Caco-2 (cell line): ENCODE measurements at regions of chr1 and their contacts with region 1.

Region 1: DNA sequence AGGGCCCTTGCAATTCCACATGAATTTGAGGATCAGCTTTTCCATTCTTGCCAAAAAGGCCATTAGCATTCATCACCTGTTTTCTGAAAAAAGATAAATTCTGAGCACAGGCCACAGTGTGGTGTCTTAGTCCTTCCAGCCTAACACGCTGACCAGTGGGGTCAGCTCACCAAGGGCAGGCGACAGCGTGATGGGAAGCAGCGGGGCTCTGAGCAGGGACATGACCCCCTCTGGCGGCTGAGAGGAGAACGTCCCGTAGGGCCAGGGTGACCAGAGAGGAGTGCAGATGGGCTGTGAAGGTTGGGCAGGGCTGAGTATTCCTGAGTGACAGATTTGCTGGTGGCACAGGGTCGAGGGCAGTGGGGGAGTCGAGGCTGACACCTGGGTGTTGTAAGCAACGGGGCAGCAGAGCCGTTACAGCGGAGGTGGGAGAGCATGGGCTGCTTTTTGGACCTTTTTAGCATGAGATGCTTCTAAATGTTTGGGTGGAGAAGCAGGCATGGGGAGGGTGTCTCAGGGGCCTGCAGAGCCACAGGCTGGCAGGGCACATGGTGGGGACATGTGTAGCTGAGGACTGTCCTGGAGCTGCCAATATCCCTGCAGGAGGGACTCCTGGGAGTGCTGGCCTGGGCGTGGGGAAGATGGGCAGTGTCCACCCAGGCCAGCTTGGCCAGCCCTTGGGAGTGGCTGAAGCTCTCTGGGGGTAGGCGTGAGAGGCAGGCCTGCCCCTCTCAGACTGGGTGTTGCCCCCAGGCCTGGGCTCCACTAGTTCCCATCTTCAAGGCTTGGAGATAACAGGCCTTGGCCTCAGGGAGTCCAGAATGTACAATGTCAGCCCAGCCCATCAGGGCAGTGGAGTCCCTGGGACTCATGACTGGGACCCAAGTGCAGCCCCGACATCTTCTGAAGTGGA is 8.6 kb upstream of the CALML6 start:
- DNase-seq: peak; percentile 82 to 89
- H3K4me3 ChIP-seq: no peak overlapping the region
- H3K4me3 Mint-ChIP-seq: peak overlapping the region; percentile 56
- H3K27ac Mint-ChIP-seq: peak overlapping the region; percentile 74
- H3K4me1 ChIP-seq: peaks cover 7% of the 10 kb centered on the region; the same call in 1 of the 2 replicates
- H3K4me1 Mint-ChIP-seq: peaks cover 14% of the 10 kb centered on the region
- H3K27me3 ChIP-seq: no peaks in the 10 kb centered on the region
- H3K27me3 Mint-ChIP-seq: no peaks in the 10 kb centered on the region
- CTCF ChIP-seq: peak; percentile 64 to 91

Region 2: DNA sequence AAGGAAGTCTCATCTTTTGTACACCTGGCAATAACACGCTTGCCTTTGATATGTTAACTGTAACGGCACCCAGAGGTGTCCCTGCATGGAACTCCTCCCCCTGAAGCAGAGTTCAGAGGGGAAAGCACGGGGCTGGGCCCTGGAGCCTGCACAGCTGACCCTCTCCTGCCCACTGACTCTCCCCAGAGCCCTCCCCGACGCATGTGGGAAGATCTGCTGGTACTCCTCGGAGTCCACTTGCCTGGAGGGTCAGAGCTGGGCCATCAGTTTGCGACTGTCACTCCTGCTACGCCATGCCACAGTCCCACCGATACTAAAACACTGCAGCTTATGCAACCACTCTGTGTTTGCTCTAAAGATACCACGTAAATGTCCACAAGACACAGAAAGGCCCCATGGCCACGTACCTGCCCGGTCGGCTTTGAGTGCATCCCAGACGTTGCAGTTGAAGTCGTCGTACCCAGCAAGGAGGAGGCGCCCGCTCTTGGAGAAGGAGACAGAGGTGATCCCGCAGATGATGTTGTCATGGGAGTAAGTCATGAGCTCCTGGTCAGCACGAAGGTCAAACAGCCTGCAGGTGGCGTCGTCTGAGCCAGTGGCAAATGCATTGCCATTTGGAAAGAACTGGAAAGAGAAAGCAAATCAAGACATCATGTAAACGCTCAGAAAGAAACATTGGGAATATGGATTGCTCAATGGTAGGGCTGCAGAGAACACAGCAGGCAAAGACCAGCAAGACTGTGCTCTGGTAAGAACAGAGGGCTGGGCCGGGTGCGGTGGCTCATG is 117.6 kb before region 1 on chr1:
- CTCF ChIA-PET with region 1: interaction called, 16 read pairs
- POLR2A ChIA-PET with region 1: no interaction called
- intact Hi-C with region 1: loop called (anchors 2 kb)
- DNase-seq: peak in 1 of 2 experiments; percentile 54
- H3K4me3 ChIP-seq: no peak overlapping the region
- H3K4me3 Mint-ChIP-seq: no peak overlapping the region
- H3K27ac Mint-ChIP-seq: peak overlapping the region; percentile 38
- H3K4me1 ChIP-seq: no peaks in the 10 kb centered on the region
- H3K4me1 Mint-ChIP-seq: no peaks in the 10 kb centered on the region
- H3K27me3 ChIP-seq: no peaks in the 10 kb centered on the region
- H3K27me3 Mint-ChIP-seq: no peaks in the 10 kb centered on the region
- CTCF ChIP-seq: peak; percentile 38 to 53

Region 3: DNA sequence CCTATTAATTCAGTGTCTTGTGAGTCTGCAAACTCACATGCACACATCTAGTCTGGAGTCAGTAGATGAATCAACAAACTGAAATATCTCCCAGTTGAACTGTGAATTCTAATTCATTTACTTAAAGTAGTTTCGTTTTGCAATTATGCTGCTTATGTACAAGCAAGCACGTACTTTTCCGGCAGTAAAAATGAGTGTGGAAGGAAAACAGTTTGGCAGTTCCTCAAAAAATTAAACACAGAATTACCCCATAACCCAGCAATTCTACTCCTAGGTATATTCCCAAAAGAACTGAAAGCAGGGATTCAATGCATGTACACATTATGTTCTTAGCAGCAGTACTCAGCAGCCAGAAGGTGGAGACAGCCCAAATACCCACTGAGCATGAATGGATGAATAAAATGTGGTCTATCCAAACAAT is 64.9 kb before region 1 on chr1:
- CTCF ChIA-PET with region 1: interaction called, 4 read pairs
- POLR2A ChIA-PET with region 1: interaction called, 6 read pairs
- intact Hi-C with region 1: loop called (anchors 5 kb)
- DNase-seq: no peak
- H3K4me3 ChIP-seq: no peak overlapping the region
- H3K4me3 Mint-ChIP-seq: no peak overlapping the region
- H3K27ac Mint-ChIP-seq: no peak overlapping the region
- H3K4me1 ChIP-seq: no peaks in the 10 kb centered on the region
- H3K4me1 Mint-ChIP-seq: peaks cover under 1% of the 10 kb centered on the region
- H3K27me3 ChIP-seq: no peaks in the 10 kb centered on the region
- H3K27me3 Mint-ChIP-seq: no peaks in the 10 kb centered on the region
- CTCF ChIP-seq: no peak

Region 4: DNA sequence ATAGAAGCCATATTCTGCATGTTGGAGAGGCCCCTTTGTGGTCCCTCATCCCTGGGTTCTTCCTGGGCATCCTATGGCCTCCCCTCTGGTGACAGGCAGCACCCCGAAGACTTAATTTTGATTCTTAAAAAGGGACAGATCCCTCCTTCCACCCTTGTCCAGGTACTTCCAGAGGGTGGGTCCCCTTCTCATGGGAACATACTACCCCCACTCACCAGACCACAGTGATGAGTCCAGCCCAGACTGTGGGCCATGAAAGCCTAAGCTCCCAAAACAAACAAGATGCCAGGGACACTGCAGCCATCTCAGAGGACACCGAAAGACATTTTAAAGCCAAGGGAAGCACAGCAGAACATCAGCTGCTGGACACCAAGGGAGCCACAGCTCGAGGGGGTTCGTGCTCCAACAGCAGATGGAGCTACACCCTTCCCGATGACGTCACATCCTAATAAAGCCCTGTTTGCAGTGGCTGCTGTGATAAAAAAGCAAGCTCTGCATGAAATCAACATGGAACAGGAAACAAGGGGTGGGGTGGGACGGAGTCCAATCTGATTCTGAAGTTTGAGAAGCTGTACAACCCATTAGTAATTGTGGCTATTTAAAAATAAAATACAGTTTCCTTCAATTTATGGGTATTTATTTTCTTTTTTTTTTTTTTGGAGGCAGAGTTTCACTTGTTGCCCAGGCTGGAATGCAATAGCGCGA is 47.9 kb before region 1 on chr1:
- CTCF ChIA-PET with region 1: interaction called, 17 read pairs
- POLR2A ChIA-PET with region 1: interaction called, 7 read pairs
- intact Hi-C with region 1: loop called (anchors 1 kb)
- DNase-seq: peak; percentile 57 to 62
- H3K4me3 ChIP-seq: no peak overlapping the region
- H3K4me3 Mint-ChIP-seq: peak overlapping the region; percentile 63
- H3K27ac Mint-ChIP-seq: peak overlapping the region; percentile 95
- H3K4me1 ChIP-seq: peaks cover 29% of the 10 kb centered on the region
- H3K4me1 Mint-ChIP-seq: peaks cover 12% of the 10 kb centered on the region
- H3K27me3 ChIP-seq: no peaks in the 10 kb centered on the region
- H3K27me3 Mint-ChIP-seq: no peaks in the 10 kb centered on the region
- CTCF ChIP-seq: peak in 1 of 2 experiments; percentile 30

Region 5: GRCh38 chr1:1890506-1891348 is 15.7 kb before region 1 on chr1 and contains the start of gene GNB1:
- CTCF ChIA-PET with region 1: interaction called, 4 read pairs
- POLR2A ChIA-PET with region 1: interaction called, 11 read pairs
- intact Hi-C with region 1: loop called (anchors 1 kb)
- DNase-seq: peak; percentile 80 to 89
- H3K4me3 ChIP-seq: peak within 1 kb of the TSS; percentile 91
- H3K4me3 Mint-ChIP-seq: peak within 1 kb of the TSS; percentile 96
- H3K27ac Mint-ChIP-seq: peak within 1 kb of the TSS; percentile 85
- H3K4me1 ChIP-seq: peaks cover 43% of the 10 kb centered on the region
- H3K4me1 Mint-ChIP-seq: peaks cover 6% of the 10 kb centered on the region
- H3K27me3 ChIP-seq: no peaks in the 10 kb centered on the region
- H3K27me3 Mint-ChIP-seq: no peaks in the 10 kb centered on the region
- CTCF ChIP-seq: no peak
- total RNA-seq, gene GNB1: 268 and 301 TPM in 2 replicates

Region 6: DNA sequence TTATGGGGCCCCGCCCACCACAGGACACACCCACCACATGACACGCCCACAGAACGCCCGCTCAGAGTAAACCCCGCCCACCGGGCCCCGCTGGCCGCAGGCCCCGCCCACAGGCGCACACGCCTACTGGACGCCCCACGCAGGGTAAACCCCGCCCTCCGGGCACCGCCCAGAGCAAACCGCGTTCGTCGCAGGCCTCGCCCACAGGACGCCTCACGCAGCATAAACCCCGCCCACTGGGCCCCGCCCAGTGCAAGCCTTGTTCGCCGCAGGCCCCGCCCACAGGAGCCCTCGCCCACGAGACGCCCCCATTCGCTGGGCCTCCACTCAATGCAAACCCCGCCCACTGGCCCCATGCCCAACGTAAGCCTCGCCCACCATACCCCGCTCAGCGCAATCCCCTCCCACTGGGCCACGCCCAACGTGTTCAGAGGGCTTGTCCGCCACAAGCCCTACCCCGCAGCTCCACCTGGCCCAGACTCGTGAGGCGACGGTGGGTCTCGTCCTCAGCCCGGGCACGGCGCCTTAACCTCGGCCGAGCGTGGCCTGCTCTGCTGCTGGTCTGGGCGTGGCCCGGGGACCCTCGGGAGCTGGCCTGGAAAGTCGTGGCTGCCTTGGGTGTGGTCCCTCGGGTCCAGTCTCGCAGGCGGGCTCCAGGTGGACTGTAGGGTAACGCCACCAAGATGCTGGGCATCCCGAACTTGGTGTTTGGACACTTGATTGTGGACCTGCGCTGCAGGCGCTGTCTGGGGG is 13.0 kb after region 1 on chr1:
- CTCF ChIA-PET with region 1: interaction called, 4 read pairs
- POLR2A ChIA-PET with region 1: interaction called, 5 read pairs
- intact Hi-C with region 1: loop called (anchors 1 kb)
- DNase-seq: peak; percentile 98
- H3K4me3 ChIP-seq: peak overlapping the region; percentile 57
- H3K4me3 Mint-ChIP-seq: peak overlapping the region; percentile 58
- H3K27ac Mint-ChIP-seq: no peak overlapping the region
- H3K4me1 ChIP-seq: peaks cover 20% of the 10 kb centered on the region; the same call in 1 of the 2 replicates
- H3K4me1 Mint-ChIP-seq: no peaks in the 10 kb centered on the region
- H3K27me3 ChIP-seq: no peaks in the 10 kb centered on the region
- H3K27me3 Mint-ChIP-seq: no peaks in the 10 kb centered on the region
- CTCF ChIP-seq: no peak